Activated B cell treated with CpG ODN at 0.5 μM for 24 hours (primary cell): ENCODE measurements at regions of chr3 and their contacts with region 1.

Region 1: DNA sequence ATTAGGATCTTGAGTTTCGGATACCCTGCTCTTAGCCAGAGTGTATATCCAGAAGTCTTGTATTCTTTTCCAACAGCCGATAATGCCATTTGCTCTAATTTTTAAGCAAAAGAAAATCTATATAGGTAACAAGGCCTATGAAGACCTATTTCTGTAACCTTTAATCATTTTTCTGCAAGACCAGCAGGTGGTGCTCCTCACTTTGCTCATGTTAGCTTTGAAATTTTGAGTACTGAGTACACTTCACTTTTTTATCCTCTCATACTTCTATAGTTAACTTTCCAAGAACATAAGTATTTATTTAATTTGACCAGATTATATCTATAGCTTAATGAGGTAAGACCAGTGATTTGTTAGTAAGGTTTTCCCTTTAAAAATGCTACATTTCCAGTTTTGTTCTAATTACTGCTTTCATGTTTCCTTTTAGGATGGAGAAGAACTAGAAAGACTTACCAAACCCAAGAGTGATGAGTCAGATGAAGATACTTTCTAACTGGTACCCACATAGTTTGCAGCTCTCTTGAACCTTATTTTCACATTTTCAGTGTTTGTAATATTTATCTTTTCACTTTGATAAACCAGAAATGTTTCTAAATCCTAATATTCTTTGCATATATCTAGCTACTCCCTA is 20.5 kb downstream of the SLC35A5 start:
- DNase-seq: no peak
- ATAC-seq: no peak
- H3K4me3 Mint-ChIP-seq: no peak overlapping the region
- H3K27ac Mint-ChIP-seq: no peak overlapping the region
- H3K4me1 Mint-ChIP-seq: peaks cover 42% of the 10 kb centered on the region
- H3K27me3 Mint-ChIP-seq: no peaks in the 10 kb centered on the region
- CTCF ChIP-seq: peak; percentile 59

Region 2: GRCh38 chr3:113035387-113035982 is 453.1 kb after region 1 on chr3:
- CTCF ChIA-PET with region 1: interaction called, 10 read pairs
- POLR2A ChIA-PET with region 1: no interaction called
- intact Hi-C with region 1: no loop called
- DNase-seq: no peak
- ATAC-seq: peak; percentile 88
- H3K4me3 Mint-ChIP-seq: no peak overlapping the region
- H3K27ac Mint-ChIP-seq: no peak overlapping the region
- H3K4me1 Mint-ChIP-seq: no peaks in the 10 kb centered on the region
- H3K27me3 Mint-ChIP-seq: no peaks in the 10 kb centered on the region
- CTCF ChIP-seq: no peak